Transverse colon (tissue), 4 donors: ENCODE measurements at regions of chr6 and their contacts with region 1.

Region 1: DNA sequence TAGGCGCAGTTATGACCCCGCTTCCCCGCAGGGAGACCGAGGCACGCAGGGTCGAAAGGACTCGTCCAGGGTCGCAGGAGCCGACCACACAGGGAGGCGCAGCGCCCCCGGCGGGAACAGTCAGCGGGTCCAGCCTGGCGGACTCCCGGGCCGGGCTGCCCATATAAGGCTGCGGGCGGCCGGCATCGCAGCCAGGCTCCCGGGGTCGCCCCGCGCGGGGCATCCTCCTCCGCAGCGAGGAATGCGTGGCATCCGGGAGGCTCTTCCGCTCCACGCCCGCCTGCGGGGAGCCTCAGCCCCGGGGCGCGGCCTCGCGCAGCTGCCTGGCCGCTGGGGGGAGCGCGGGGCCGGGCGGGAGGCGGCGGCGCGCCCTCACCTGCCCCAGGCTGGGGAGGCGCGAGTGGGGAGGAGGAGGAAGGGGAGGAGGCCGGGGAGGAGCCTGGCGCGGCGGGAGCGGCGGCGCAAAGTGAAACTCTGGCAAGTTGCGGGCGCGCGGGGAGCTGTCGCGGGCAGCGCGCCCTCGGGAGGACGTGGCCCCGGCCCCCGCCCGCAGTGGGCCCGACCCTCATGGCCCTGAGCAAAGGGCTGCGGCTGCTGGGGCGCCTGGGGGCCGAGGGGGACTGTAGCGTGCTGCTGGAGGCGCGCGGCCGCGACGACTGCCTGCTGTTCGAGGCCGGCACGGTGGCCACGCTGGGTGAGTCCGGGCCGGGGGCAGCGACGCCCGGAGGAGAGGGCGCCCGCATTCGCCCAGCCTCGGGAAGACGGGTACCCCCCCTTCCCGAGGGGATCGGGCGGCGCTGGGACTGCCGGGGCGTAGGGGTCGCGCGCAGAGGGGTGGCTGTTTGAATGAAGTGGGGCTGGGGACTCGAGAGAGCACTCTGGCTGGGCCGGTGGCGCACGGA is at the start of gene SYNJ2:
- DNase-seq: peak; percentile 90
- H3K4me3 ChIP-seq: peak within 1 kb of the TSS; percentile 64 to 94 (median 82)
- H3K27ac ChIP-seq: peak within 1 kb of the TSS; percentile 85 to 94 (median 90)
- H3K4me1 ChIP-seq: peaks cover 10 to 53% (median 35%) of the 10 kb centered on the region in 4 donors
- H3K27me3 ChIP-seq: no peaks in the 10 kb centered on the region
- CTCF ChIP-seq: peak; percentile 49 to 78 (median 66)
- EP300 ChIP-seq: no peak
- POLR2A ChIP-seq: peak; percentile 60
- total RNA-seq, gene SYNJ2: 27.8 to 42.6 (median 31.8) TPM

Region 2: DNA sequence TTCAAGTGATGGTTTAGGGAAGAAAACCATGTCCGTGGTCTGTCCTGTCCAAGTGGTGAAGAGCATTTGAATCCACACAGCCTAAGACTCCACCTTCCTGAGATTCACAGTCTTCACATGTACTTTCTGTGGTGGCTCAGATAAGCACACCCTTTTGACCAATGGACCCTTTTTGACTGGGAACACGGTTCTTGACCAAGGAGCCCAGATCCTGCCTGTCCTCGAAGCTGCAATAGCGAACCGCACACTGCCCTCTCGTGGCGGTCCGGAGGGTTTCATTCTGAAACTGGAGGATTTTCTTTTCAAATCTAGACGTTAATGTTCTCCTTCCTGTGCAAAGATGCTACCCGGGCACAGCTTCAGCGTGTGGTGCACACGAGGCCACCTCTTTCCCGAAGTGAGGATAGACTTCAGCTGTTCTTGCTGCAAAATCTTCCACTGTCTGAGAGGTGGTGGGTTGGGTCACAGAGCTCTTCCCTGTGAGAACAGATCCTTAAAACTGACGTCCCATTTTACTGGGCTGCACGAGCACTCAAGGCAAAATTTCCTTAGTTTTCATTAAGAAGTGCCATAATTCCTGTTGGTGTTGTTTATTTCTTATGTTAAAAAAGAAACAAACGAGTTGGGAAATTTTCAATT is 90.6 kb after region 1 on chr6:
- in situ Hi-C with region 1: no loop called
- intact Hi-C with region 1: loop called (anchors 10 kb)
- DNase-seq: peak; percentile 75
- H3K4me3 ChIP-seq: no peak overlapping the region
- H3K27ac ChIP-seq: no peak overlapping the region
- H3K4me1 ChIP-seq: peaks cover 0 to 18% (median 5%) of the 10 kb centered on the region in 4 donors
- H3K27me3 ChIP-seq: no peaks in the 10 kb centered on the region
- CTCF ChIP-seq: peak; percentile 77 to 86 (median 81)
- EP300 ChIP-seq: no peak
- POLR2A ChIP-seq: no peak